ENCODE measurements at regions of chr5 and their contacts with region 1.

Region 1: GRCh38 chr5:118987988-118988865 is at the start of gene DTWD2:
- DNase-seq: peak; percentile 89
- ATAC-seq: peak; percentile 97
- H3K4me3 ChIP-seq: peak within 1 kb of the TSS; percentile 57 to 70
- H3K27ac ChIP-seq: peak within 1 kb of the TSS; percentile 82
- H3K4me1 ChIP-seq: peaks cover 6 to 17% of the 10 kb centered on the region in 2 experiments; a peak in 3 of 4 replicates
- H3K27me3 ChIP-seq: no peaks in the 10 kb centered on the region
- CTCF ChIP-seq: peak; percentile 75 to 89 (median 77)
- POLR2A ChIP-seq: peak; percentile 66
- RAD21 ChIP-seq: peak; percentile 82
- total RNA-seq, gene DTWD2: 5.2 TPM

Region 2: GRCh38 chr5:119070828-119071572 is 82.8 kb after region 1 on chr5 and contains the start of gene DMXL1:
- CTCF ChIA-PET with region 1: no interaction called
- POLR2A ChIA-PET with region 1: interaction called, 5 read pairs
- RAD21 ChIA-PET with region 1: no interaction called
- intact Hi-C with region 1: loop called (anchors 1 kb)
- DNase-seq: peak; percentile 99
- ATAC-seq: peak; percentile 93
- H3K4me3 ChIP-seq: peak within 1 kb of the TSS; percentile 80 to 87
- H3K27ac ChIP-seq: peak within 1 kb of the TSS; percentile 70
- H3K4me1 ChIP-seq: peaks cover 10 to 13% of the 10 kb centered on the region in 2 experiments; a peak in 3 of 4 replicates
- H3K27me3 ChIP-seq: no peaks in the 10 kb centered on the region
- CTCF ChIP-seq: no peak
- POLR2A ChIP-seq: no peak
- RAD21 ChIP-seq: no peak
- total RNA-seq, gene DMXL1: 21.1 TPM

Region 3: GRCh38 chr5:119190470-119191095 is 202.4 kb after region 1 on chr5:
- CTCF ChIA-PET with region 1: no interaction called
- POLR2A ChIA-PET with region 1: no interaction called
- RAD21 ChIA-PET with region 1: no interaction called
- intact Hi-C with region 1: no loop called
- DNase-seq: no peak
- ATAC-seq: no peak
- H3K4me3 ChIP-seq: no peak overlapping the region
- H3K27ac ChIP-seq: no peak overlapping the region
- H3K4me1 ChIP-seq: no peaks in the 10 kb centered on the region
- H3K27me3 ChIP-seq: no peaks in the 10 kb centered on the region
- CTCF ChIP-seq: no peak
- POLR2A ChIP-seq: no peak
- RAD21 ChIP-seq: no peak

Region 4: DNA sequence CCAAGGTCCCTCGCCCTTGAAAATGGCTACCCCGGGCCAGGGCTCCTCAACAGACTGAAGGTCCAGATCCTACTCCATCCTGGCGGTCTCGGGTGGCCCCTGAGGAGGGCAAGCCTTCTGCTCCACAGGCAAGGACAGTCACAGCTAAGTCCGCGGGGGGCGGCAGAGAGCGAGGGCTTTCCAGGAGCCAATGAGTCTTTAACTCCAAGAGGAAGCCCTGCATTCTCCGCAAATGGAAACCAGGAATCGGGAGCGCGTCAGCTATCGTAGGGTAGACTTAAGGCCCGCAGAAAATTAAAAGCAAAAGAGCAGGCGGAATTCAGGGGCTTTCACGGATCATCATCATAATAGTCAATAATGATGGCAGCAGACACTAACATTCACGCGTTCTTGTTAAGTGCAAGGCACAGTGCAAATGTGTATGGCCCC is 279.7 kb after region 1 on chr5:
- CTCF ChIA-PET with region 1: interaction called, 4 read pairs
- POLR2A ChIA-PET with region 1: no interaction called
- RAD21 ChIA-PET with region 1: no interaction called
- intact Hi-C with region 1: loop called (anchors 10 kb)
- DNase-seq: peak; percentile 62
- ATAC-seq: peak; percentile 67
- H3K4me3 ChIP-seq: peak overlapping the region; percentile 70 to 84
- H3K27ac ChIP-seq: peak overlapping the region; percentile 72; the same call in 1 of the 2 replicates
- H3K4me1 ChIP-seq: peaks cover 11 to 24% of the 10 kb centered on the region in 2 experiments
- H3K27me3 ChIP-seq: no peaks in the 10 kb centered on the region
- CTCF ChIP-seq: no peak
- POLR2A ChIP-seq: no peak
- RAD21 ChIP-seq: no peak; the same call in 1 of the 2 replicates

Region 5: GRCh38 chr5:119335261-119335677 is 347.0 kb after region 1 on chr5:
- CTCF ChIA-PET with region 1: interaction called, 16 read pairs
- POLR2A ChIA-PET with region 1: no interaction called
- RAD21 ChIA-PET with region 1: no interaction called
- intact Hi-C with region 1: loop called (anchors 2 kb)
- DNase-seq: no peak
- ATAC-seq: peak; percentile 25; the same call in 1 of the 2 replicates
- H3K4me3 ChIP-seq: no peak overlapping the region
- H3K27ac ChIP-seq: no peak overlapping the region
- H3K4me1 ChIP-seq: no peaks in the 10 kb centered on the region; a peak in 1 of 4 replicates
- H3K27me3 ChIP-seq: no peaks in the 10 kb centered on the region
- CTCF ChIP-seq: no peak
- POLR2A ChIP-seq: no peak
- RAD21 ChIP-seq: no peak

Region 6: GRCh38 chr5:119411935-119412602 is 423.8 kb after region 1 on chr5:
- CTCF ChIA-PET with region 1: interaction called, 47 read pairs
- POLR2A ChIA-PET with region 1: interaction called, 5 read pairs
- RAD21 ChIA-PET with region 1: interaction called, 5 to 8 read pairs
- intact Hi-C with region 1: loop called (anchors 1 kb)
- DNase-seq: peak; percentile 76
- ATAC-seq: peak; percentile 94
- H3K4me3 ChIP-seq: peak overlapping the region; percentile 44 to 52
- H3K27ac ChIP-seq: peak overlapping the region; percentile 3; the same call in 1 of the 2 replicates
- H3K4me1 ChIP-seq: peaks cover 0 to 10% of the 10 kb centered on the region in 2 experiments; a peak in 2 of 4 replicates
- H3K27me3 ChIP-seq: no peaks in the 10 kb centered on the region
- CTCF ChIP-seq: peak; percentile 85 to 97 (median 97)
- POLR2A ChIP-seq: no peak
- RAD21 ChIP-seq: peak; percentile 92

Region 7: DNA sequence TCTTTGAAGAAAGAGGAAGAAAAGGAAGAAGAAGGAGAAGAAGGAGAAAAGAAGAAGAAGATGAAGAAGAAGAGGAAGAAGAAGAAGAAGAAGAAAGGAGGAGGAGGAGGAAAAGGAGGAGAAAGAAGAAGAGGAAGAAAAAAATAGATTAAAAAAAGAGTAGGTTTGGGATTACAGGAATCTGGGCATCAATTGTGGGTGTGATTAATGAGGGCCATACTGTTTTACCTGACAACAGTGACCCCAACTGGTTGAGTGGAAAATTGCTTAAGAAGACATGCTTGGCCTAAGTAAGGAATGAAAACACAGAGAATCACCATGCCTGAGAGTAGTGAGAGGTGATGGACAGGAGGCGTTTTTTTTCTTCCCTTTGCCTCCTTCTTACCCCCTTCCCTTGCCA is 755.7 kb after region 1 on chr5:
- CTCF ChIA-PET with region 1: no interaction called
- POLR2A ChIA-PET with region 1: no interaction called
- RAD21 ChIA-PET with region 1: no interaction called
- intact Hi-C with region 1: loop called (anchors 5 kb)
- DNase-seq: peak; percentile 59
- ATAC-seq: peak; percentile 86
- H3K4me3 ChIP-seq: no peak overlapping the region
- H3K27ac ChIP-seq: no peak overlapping the region
- H3K4me1 ChIP-seq: no peaks in the 10 kb centered on the region
- H3K27me3 ChIP-seq: no peaks in the 10 kb centered on the region
- CTCF ChIP-seq: peak; percentile 34 to 72 (median 54); a peak in 4 of 6 replicates
- POLR2A ChIP-seq: no peak
- RAD21 ChIP-seq: peak; percentile 67